ENCODE measurements at regions of chr16 and their contacts with region 1.

Region 1: GRCh38 chr16:23803591-23804123 is 32.1 kb upstream of the PRKCB start:
- DNase-seq: peak; percentile 84
- ATAC-seq: peak; percentile 92
- H3K4me3 Mint-ChIP-seq: peak overlapping the region; percentile 3
- H3K27ac Mint-ChIP-seq: peak overlapping the region; percentile 1
- H3K4me1 Mint-ChIP-seq: peaks cover 14% of the 10 kb centered on the region
- H3K27me3 Mint-ChIP-seq: no peaks in the 10 kb centered on the region
- CTCF ChIP-seq: peak; percentile 75

Region 2: DNA sequence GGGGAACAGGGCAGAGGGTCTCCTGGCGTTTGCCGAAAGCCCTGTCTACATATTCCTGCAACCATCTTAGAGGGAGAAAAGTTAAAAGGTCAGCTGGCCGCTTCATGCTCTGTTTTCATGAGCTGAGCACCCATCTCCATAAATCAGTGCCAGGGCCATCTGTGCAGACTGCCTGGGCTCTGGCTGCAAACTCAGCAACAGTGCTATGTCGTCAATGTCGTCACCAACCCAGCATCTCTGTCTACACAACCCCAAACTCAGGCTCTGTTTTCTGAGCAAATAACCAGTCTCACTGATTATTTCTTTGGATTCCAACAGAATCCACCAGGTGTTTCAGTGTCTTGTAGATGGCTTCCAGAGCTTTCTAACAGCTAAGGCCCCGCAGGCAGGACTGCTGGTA is 924.7 kb before region 1 on chr16:
- CTCF ChIA-PET with region 1: no interaction called
- POLR2A ChIA-PET with region 1: no interaction called
- intact Hi-C with region 1: no loop called
- DNase-seq: no peak
- ATAC-seq: no peak
- H3K4me3 Mint-ChIP-seq: no peak overlapping the region
- H3K27ac Mint-ChIP-seq: no peak overlapping the region
- H3K4me1 Mint-ChIP-seq: no peaks in the 10 kb centered on the region
- H3K27me3 Mint-ChIP-seq: peaks cover 8% of the 10 kb centered on the region
- CTCF ChIP-seq: no peak

Region 3: DNA sequence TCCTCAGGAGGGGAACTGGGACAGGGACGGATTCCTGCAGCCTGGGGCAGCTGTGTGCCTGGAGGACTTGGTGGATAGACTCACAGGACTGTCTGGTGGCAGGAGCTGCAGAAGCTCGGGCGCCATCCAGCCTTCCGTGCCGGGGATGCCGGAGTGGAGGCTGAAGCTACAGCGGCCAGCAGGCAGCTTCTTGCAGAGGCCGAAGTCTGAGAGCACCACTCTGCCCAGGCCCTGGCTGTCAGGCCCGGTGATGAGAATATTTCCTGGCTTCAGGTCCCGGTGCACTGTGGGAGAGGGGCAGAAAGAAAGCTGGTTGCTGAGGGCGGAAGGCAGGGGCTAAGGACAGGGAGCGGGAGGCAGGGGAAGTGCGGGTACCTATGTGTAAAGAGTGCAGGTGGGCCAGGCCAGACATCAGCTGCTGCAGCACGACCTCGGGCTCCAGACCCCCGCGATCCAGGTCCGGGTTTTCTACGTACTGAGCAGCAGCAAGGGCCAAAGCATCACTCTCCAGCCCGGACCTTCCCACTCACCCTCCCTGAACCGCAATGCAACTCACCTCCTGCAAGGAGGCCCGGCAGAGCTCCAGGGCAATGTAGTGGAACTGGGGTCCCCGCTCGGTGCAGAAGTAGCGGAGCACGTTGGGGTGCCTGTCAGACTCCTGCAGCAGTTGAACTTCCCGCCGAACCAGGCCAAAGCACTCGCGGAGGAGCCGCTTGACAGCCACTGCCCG is 108.8 kb before region 1 on chr16:
- CTCF ChIA-PET with region 1: no interaction called
- POLR2A ChIA-PET with region 1: no interaction called
- intact Hi-C with region 1: no loop called
- DNase-seq: peak; percentile 12
- ATAC-seq: peak; percentile 22
- H3K4me3 Mint-ChIP-seq: no peak overlapping the region
- H3K27ac Mint-ChIP-seq: no peak overlapping the region
- H3K4me1 Mint-ChIP-seq: peaks cover 5% of the 10 kb centered on the region
- H3K27me3 Mint-ChIP-seq: peaks cover 7% of the 10 kb centered on the region
- CTCF ChIP-seq: no peak

Region 4: DNA sequence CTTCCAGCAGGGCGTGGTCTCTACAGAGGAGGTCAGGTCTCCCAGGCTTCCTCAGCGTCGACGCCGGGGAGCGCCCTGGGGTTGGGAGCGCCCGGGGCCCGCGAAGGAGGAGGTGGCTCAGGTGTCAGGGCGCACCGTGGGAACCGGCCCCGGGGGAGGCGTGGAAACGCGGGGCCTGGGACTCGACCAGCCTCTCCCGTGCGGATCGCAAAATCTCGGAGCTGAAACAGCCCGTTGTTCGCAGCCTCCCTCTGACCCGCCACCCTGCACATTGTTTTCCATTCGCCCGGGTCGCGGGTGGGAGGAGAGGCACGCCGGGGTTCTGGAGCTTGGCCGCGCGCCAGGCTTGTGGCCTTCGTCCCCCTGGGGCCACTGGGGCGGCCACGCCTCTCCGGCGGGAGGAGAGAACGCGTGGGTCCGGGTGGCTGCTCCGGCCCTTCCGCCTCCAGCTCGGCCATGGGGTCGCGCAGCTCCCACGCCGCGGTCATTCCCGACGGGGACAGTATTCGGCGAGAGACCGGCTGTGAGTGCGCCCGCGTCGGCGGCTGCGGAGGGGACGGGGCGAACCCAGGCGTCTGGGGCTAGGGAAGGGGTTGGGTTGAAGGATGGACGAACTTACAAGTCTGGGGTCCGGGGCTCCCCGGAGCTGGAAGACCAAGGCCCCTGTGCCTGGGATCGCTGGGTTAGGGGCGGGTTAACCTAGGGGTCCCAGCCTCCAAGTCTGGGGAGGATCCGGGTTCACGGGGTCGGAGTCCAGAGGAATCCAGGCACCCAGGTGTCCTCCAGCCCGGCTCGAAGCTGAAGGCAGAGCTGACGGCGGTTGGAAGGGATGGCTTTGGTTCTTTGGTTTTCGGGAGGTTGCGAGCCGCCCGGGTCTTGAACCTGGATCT is 48.8 kb before region 1 on chr16 and contains the start of gene CHP2:
- CTCF ChIA-PET with region 1: no interaction called
- POLR2A ChIA-PET with region 1: no interaction called
- intact Hi-C with region 1: no loop called
- DNase-seq: no peak
- ATAC-seq: no peak
- H3K4me3 Mint-ChIP-seq: no peak within 1 kb of the TSS
- H3K27ac Mint-ChIP-seq: no peak within 1 kb of the TSS
- H3K4me1 Mint-ChIP-seq: no peaks in the 10 kb centered on the region
- H3K27me3 Mint-ChIP-seq: peaks cover 40% of the 10 kb centered on the region
- CTCF ChIP-seq: no peak
- total RNA-seq, gene CHP2: not detected

Region 5: GRCh38 chr16:23770744-23771426 is 32.8 kb before region 1 on chr16:
- CTCF ChIA-PET with region 1: no interaction called
- POLR2A ChIA-PET with region 1: no interaction called
- intact Hi-C with region 1: no loop called
- DNase-seq: no peak
- ATAC-seq: no peak
- H3K4me3 Mint-ChIP-seq: no peak overlapping the region
- H3K27ac Mint-ChIP-seq: no peak overlapping the region
- H3K4me1 Mint-ChIP-seq: no peaks in the 10 kb centered on the region
- H3K27me3 Mint-ChIP-seq: no peaks in the 10 kb centered on the region
- CTCF ChIP-seq: no peak

Region 6: DNA sequence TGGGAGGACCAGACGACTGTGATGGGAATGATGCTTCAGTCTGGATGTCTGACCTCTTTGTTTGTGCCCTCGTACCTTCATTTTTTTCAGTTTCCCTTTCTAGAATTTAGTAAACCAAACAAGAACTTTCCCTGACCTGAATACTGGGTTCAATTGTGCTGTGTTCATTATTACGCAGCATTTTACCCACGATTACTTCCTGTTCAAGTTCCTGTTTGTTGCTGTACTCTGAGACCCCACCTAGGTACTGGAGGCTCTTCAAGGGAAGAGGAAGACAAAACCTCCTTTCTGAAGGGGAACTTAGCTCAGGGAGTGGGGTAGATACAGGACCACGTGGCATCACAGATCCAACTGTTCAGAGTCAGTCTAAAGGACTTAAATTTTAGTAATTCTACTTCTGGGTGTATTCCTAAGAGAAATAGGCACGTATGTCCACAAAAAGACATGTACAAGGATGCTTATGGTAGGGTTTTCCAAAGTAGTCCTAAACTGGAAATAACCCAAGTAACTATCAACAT is 22.9 kb after region 1 on chr16:
- CTCF ChIA-PET with region 1: interaction called, 94 read pairs
- POLR2A ChIA-PET with region 1: interaction called, 3 read pairs
- intact Hi-C with region 1: no loop called
- DNase-seq: peak; percentile 17
- ATAC-seq: peak; percentile 61
- H3K4me3 Mint-ChIP-seq: peak overlapping the region; percentile 46
- H3K27ac Mint-ChIP-seq: peak overlapping the region; percentile 85
- H3K4me1 Mint-ChIP-seq: peaks cover 26% of the 10 kb centered on the region
- H3K27me3 Mint-ChIP-seq: no peaks in the 10 kb centered on the region
- CTCF ChIP-seq: no peak

Region 7: GRCh38 chr16:23862556-23862955 is 58.9 kb after region 1 on chr16:
- CTCF ChIA-PET with region 1: interaction called, 12 read pairs
- POLR2A ChIA-PET with region 1: no interaction called
- intact Hi-C with region 1: no loop called
- DNase-seq: no peak
- ATAC-seq: no peak
- H3K4me3 Mint-ChIP-seq: no peak overlapping the region
- H3K27ac Mint-ChIP-seq: peak overlapping the region; percentile 32
- H3K4me1 Mint-ChIP-seq: peaks cover 80% of the 10 kb centered on the region
- H3K27me3 Mint-ChIP-seq: no peaks in the 10 kb centered on the region
- CTCF ChIP-seq: no peak

Region 8: GRCh38 chr16:24041826-24042631 is 238.4 kb after region 1 on chr16:
- CTCF ChIA-PET with region 1: interaction called, 144 read pairs
- POLR2A ChIA-PET with region 1: no interaction called
- intact Hi-C with region 1: no loop called
- DNase-seq: peak; percentile 92
- ATAC-seq: peak; percentile 97
- H3K4me3 Mint-ChIP-seq: no peak overlapping the region
- H3K27ac Mint-ChIP-seq: no peak overlapping the region
- H3K4me1 Mint-ChIP-seq: peaks cover 4% of the 10 kb centered on the region
- H3K27me3 Mint-ChIP-seq: no peaks in the 10 kb centered on the region
- CTCF ChIP-seq: peak; percentile 86